HepG2 (cell line): ENCODE measurements at regions of chr7 and their contacts with region 1.

Region 1: GRCh38 chr7:12067141-12067831 is 143.8 kb upstream of the TMEM106B start:
- DNase-seq: peak; percentile 48
- ATAC-seq: peak; percentile 95
- H3K4me3 ChIP-seq: no peak overlapping the region
- H3K27ac ChIP-seq: no peak overlapping the region
- H3K4me1 ChIP-seq: no peaks in the 10 kb centered on the region
- H3K27me3 ChIP-seq: no peaks in the 10 kb centered on the region
- CTCF ChIP-seq: peak; percentile 76
- EP300 ChIP-seq: no peak
- POLR2A ChIP-seq: no peak
- RAD21 ChIP-seq: peak; percentile 79

Region 2: GRCh38 chr7:11427686-11428273 is 639.5 kb before region 1 on chr7:
- CTCF ChIA-PET with region 1: no interaction called
- POLR2A ChIA-PET with region 1: no interaction called
- in situ Hi-C with region 1: no loop called
- intact Hi-C with region 1: loop called (anchors 10 kb)
- DNase-seq: peak; percentile 27
- ATAC-seq: peak; percentile 53; the same call in 2 of the 3 replicates
- H3K4me3 ChIP-seq: no peak overlapping the region
- H3K27ac ChIP-seq: no peak overlapping the region
- H3K4me1 ChIP-seq: no peaks in the 10 kb centered on the region
- H3K27me3 ChIP-seq: no peaks in the 10 kb centered on the region
- CTCF ChIP-seq: peak; percentile 64
- EP300 ChIP-seq: no peak
- POLR2A ChIP-seq: no peak
- RAD21 ChIP-seq: no peak

Region 3: GRCh38 chr7:12004581-12004980 is 62.7 kb before region 1 on chr7:
- CTCF ChIA-PET with region 1: no interaction called
- POLR2A ChIA-PET with region 1: no interaction called
- in situ Hi-C with region 1: no loop called
- intact Hi-C with region 1: no loop called
- DNase-seq: no peak
- ATAC-seq: no peak
- H3K4me3 ChIP-seq: no peak overlapping the region
- H3K27ac ChIP-seq: no peak overlapping the region
- H3K4me1 ChIP-seq: no peaks in the 10 kb centered on the region
- H3K27me3 ChIP-seq: no peaks in the 10 kb centered on the region
- CTCF ChIP-seq: no peak
- EP300 ChIP-seq: no peak
- POLR2A ChIP-seq: no peak
- RAD21 ChIP-seq: no peak

Region 4: GRCh38 chr7:12158334-12159060 is 91.2 kb after region 1 on chr7:
- CTCF ChIA-PET with region 1: no interaction called
- POLR2A ChIA-PET with region 1: no interaction called
- in situ Hi-C with region 1: no loop called
- intact Hi-C with region 1: loop called (anchors 5 kb)
- DNase-seq: peak; percentile 3
- ATAC-seq: peak; percentile 71
- H3K4me3 ChIP-seq: no peak overlapping the region
- H3K27ac ChIP-seq: no peak overlapping the region
- H3K4me1 ChIP-seq: no peaks in the 10 kb centered on the region
- H3K27me3 ChIP-seq: no peaks in the 10 kb centered on the region
- CTCF ChIP-seq: no peak
- EP300 ChIP-seq: no peak
- POLR2A ChIP-seq: no peak
- RAD21 ChIP-seq: no peak

Region 5: DNA sequence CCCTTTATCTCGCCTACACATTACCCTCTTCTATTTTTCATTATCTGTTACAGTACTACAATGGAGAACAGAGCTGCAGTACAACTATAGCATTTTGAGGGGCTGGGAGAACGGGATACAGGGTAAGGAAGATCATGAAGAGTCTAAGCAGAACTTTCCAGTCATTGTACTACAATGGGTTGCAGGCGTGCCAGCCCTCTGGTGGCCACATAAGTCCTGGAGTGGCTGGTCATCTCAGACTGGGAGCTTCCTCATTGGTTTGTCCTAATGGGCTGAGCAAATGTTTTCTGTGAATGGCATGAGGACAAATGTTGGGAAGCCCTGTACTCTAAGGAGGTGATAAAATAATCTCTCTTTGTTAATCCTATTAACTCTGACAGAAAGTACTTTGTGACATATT is 176.8 kb after region 1 on chr7:
- CTCF ChIA-PET with region 1: interaction called, 13 read pairs
- POLR2A ChIA-PET with region 1: no interaction called
- in situ Hi-C with region 1: loop called (anchors 5 kb)
- intact Hi-C with region 1: loop called (anchors 1 kb)
- DNase-seq: peak; percentile 43
- ATAC-seq: peak; percentile 100
- H3K4me3 ChIP-seq: no peak overlapping the region
- H3K27ac ChIP-seq: no peak overlapping the region
- H3K4me1 ChIP-seq: no peaks in the 10 kb centered on the region
- H3K27me3 ChIP-seq: no peaks in the 10 kb centered on the region
- CTCF ChIP-seq: peak; percentile 74
- EP300 ChIP-seq: no peak
- POLR2A ChIP-seq: no peak
- RAD21 ChIP-seq: peak; percentile 64

Region 6: DNA sequence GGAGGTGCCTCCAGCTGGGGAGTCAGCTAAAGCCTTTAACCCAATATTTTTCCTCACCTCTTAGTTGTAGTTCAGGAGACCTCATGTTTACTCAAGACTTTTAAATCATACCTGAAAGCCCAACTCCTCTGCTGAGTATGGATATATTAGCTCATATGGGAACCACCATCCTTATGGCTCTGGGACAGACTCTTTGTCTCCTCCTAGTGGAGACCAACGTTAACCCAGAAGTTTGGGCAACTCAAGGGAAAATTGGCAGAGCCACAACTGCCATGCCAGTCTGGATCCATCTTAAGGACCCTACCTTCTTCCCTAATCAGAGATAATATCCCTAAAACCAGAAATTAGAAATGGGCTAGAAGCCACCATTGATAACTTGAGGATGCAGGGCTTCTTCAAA is 224.6 kb after region 1 on chr7:
- CTCF ChIA-PET with region 1: interaction called, 11 read pairs
- POLR2A ChIA-PET with region 1: no interaction called
- in situ Hi-C with region 1: no loop called
- intact Hi-C with region 1: loop called (anchors 1 kb)
- DNase-seq: peak; percentile 6
- ATAC-seq: peak; percentile 47; the same call in 2 of the 3 replicates
- H3K4me3 ChIP-seq: no peak overlapping the region
- H3K27ac ChIP-seq: no peak overlapping the region
- H3K4me1 ChIP-seq: no peaks in the 10 kb centered on the region
- H3K27me3 ChIP-seq: no peaks in the 10 kb centered on the region
- CTCF ChIP-seq: peak; percentile 35; the same call in 1 of the 2 replicates
- EP300 ChIP-seq: no peak
- POLR2A ChIP-seq: no peak
- RAD21 ChIP-seq: no peak

Region 7: DNA sequence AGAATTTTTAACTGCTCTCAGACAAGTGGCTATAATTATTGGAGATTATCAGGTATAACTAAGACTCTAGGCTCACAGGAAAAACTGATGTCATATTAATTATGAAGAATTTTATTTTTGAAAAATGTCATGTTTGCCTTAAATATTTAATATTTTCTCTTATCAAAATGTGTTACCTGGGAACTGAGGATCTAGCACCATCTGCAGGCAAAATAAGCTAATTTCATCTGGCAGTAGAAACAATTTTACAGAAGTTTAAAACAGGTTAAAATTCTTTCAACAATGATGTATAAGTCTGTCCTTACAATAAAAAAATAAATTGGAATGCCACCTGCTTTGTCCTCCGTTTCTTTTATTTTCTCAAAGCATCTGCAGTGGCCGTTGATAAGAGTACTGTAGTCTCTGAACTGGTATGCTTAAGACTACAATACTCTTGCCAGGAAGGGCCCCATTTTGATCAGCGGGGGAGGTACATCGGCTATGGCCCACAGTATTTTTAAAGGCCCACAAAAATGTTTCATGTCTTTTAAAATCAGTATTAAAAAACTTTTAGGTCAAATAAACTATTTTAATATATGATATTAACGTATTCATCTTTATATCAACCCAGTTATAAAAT is 255.1 kb after region 1 on chr7:
- CTCF ChIA-PET with region 1: interaction called, 42 read pairs
- POLR2A ChIA-PET with region 1: no interaction called
- in situ Hi-C with region 1: loop called (anchors 5 kb)
- intact Hi-C with region 1: loop called (anchors 1 kb)
- DNase-seq: peak; percentile 3
- ATAC-seq: no peak
- H3K4me3 ChIP-seq: no peak overlapping the region
- H3K27ac ChIP-seq: no peak overlapping the region
- H3K4me1 ChIP-seq: no peaks in the 10 kb centered on the region
- H3K27me3 ChIP-seq: no peaks in the 10 kb centered on the region
- CTCF ChIP-seq: peak; percentile 57
- EP300 ChIP-seq: no peak
- POLR2A ChIP-seq: no peak
- RAD21 ChIP-seq: no peak

Region 8: DNA sequence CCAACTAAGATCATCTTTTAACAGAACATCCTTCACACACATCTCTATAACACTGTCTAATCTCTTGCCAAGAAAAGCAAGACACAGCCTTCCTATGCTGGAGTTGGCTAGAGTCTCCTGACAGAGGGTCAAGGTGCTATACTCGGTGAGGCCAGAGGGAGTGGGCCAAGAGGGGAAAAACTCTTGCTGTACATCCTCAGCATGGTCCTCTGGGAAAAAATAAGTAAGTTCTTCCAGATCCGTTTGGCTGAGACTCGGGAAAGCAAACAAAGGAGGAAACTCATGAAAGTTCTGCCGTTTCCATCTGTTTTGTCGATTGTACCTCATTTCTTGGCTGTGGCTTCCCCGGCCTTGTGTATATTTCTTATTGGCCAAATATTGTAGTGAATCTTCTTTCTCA is 302.5 kb after region 1 on chr7:
- CTCF ChIA-PET with region 1: no interaction called
- POLR2A ChIA-PET with region 1: no interaction called
- in situ Hi-C with region 1: no loop called
- intact Hi-C with region 1: no loop called
- DNase-seq: no peak
- ATAC-seq: no peak
- H3K4me3 ChIP-seq: no peak overlapping the region
- H3K27ac ChIP-seq: no peak overlapping the region
- H3K4me1 ChIP-seq: no peaks in the 10 kb centered on the region
- H3K27me3 ChIP-seq: no peaks in the 10 kb centered on the region
- CTCF ChIP-seq: no peak
- EP300 ChIP-seq: no peak
- POLR2A ChIP-seq: no peak
- RAD21 ChIP-seq: no peak